Uterus (tissue), 4 donors: ENCODE measurements at regions of chr9 and their contacts with region 1.

Region 1: GRCh38 chr9:130053504-130054324 is at the start of gene GPR107:
- DNase-seq: peak; percentile 72 to 82
- H3K4me3 ChIP-seq: peak within 1 kb of the TSS; percentile 83 to 93
- H3K27ac ChIP-seq: peak within 1 kb of the TSS; percentile 87 to 88
- H3K4me1 ChIP-seq: peaks cover 0 to 6% of the 10 kb centered on the region in 2 donors
- H3K27me3 ChIP-seq: no peaks in the 10 kb centered on the region
- CTCF ChIP-seq: no peak
- POLR2A ChIP-seq: peak; percentile 50 to 69
- total RNA-seq, gene GPR107: 10.8 to 41.5 (median 26.7) TPM

Region 2: DNA sequence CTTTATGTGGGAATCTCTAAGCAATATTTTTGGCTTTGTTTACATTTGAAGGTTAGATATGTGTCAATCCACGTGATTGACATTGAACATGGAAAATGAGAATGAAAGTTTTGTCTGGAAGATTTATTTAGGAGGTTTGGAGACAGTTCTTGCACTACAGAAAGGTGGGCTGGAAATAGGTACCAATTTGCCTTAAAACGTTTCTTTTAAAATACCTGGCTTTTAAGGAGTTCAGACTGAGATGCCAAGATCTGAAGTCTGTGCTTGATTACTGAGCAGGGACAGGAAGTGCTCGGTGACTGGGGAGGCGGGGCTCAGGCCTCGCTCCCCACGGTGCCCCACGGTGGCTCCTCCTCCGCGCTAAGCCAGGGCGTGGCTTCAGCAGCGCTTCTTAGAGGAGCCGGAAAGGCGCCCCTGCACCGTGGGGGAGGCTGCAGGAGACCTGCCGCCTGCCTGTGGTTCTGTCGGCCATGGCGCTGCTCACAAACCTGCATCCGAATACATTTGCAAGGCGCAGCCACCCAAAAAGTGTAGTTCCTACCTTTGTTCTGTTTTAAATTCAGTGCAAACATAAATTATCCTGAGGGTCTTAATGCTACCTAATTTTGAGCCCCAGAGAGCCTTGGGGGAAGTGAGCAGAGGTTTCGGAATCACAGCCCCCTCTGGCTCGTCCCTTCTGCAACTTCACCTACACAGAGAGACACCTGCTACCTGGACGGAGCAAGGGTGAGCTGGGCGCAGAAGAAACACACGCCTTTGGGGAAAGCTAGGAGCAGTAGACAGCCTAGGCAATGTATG is 169.3 kb before region 1 on chr9:
- intact Hi-C with region 1: loop called (anchors 5 kb)
- DNase-seq: peak; percentile 84 to 89
- H3K4me3 ChIP-seq: peak overlapping the region; percentile 1 to 21
- H3K27ac ChIP-seq: peak overlapping the region; percentile 82 to 87
- H3K4me1 ChIP-seq: peaks cover 0 to 9% of the 10 kb centered on the region in 2 donors
- H3K27me3 ChIP-seq: no peaks in the 10 kb centered on the region
- CTCF ChIP-seq: no peak
- POLR2A ChIP-seq: peak in 1 of 2 donors; percentile 21